ENCODE measurements at regions of chr18 and their contacts with region 1.

Region 1: GRCh38 chr18:70428439-70428838 is 139.6 kb downstream of the SOCS6 start:
- DNase-seq: no peak
- H3K4me3 ChIP-seq: no peak overlapping the region
- CTCF ChIP-seq: no peak

Region 2: DNA sequence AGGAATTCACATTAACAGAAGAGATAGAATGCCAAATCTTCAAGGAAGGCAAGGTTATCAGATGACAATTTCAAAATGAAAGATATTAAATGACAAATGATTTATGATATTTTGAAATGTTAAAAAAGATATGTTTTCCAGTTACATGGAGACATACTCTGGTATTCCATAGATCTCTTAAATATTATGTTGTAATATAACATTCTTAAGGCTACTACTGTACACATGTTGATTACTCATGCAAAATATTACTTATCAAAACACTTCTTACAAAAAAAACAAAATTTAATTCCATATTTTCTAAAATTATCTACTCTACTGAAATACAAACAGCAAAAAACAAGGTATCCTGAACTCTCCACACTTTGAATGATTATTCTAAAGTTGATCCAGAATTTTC is 245.9 kb before region 1 on chr18:
- CTCF ChIA-PET with region 1: interaction called, 471 read pairs
- POLR2A ChIA-PET with region 1: no interaction called
- DNase-seq: no peak
- H3K4me3 ChIP-seq: no peak overlapping the region
- CTCF ChIP-seq: no peak

Region 3: GRCh38 chr18:70205421-70206397 is 222.7 kb before region 1 on chr18 and contains the start of gene RTTN:
- CTCF ChIA-PET with region 1: interaction called, 471 read pairs
- POLR2A ChIA-PET with region 1: no interaction called
- DNase-seq: peak; percentile 76
- H3K4me3 ChIP-seq: peak within 1 kb of the TSS; percentile 85
- CTCF ChIP-seq: no peak

Region 4: GRCh38 chr18:70228546-70228945 is 199.9 kb before region 1 on chr18:
- CTCF ChIA-PET with region 1: no interaction called
- POLR2A ChIA-PET with region 1: no interaction called
- DNase-seq: no peak
- H3K4me3 ChIP-seq: no peak overlapping the region
- CTCF ChIP-seq: no peak

Region 5: GRCh38 chr18:70256994-70257393 is 171.4 kb before region 1 on chr18:
- CTCF ChIA-PET with region 1: interaction called, 10 read pairs
- POLR2A ChIA-PET with region 1: no interaction called
- DNase-seq: no peak
- H3K4me3 ChIP-seq: no peak overlapping the region
- CTCF ChIP-seq: no peak

Region 6: DNA sequence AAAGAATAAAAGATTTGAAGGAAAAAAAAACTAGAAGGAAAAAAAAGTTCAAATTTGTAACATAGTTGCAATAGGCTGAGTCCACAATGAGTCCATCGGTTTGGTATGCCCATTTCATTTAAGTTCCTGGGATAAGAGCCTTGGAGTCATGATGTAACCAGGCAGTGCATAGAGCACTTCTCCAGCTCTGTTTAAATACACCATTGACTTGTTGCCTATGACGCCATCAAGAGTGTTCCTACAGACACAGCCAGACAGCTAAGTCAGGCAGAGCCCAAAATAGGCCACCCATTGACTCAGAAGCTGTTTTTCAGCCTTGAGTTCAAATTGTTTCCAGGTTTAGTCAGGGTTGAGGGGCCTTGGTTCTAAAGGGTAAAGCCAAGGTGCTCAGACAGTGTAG is 94.7 kb before region 1 on chr18:
- CTCF ChIA-PET with region 1: interaction called, 13 read pairs
- POLR2A ChIA-PET with region 1: no interaction called
- DNase-seq: peak; percentile 99
- H3K4me3 ChIP-seq: no peak overlapping the region
- CTCF ChIP-seq: no peak